Activated naive CD4-positive, alpha-beta T cell treated with anti-CD3 and anti-CD28 coated beads for 36 hours (primary cell): ENCODE measurements at regions of chr13 and their contacts with region 1.

Region 1: DNA sequence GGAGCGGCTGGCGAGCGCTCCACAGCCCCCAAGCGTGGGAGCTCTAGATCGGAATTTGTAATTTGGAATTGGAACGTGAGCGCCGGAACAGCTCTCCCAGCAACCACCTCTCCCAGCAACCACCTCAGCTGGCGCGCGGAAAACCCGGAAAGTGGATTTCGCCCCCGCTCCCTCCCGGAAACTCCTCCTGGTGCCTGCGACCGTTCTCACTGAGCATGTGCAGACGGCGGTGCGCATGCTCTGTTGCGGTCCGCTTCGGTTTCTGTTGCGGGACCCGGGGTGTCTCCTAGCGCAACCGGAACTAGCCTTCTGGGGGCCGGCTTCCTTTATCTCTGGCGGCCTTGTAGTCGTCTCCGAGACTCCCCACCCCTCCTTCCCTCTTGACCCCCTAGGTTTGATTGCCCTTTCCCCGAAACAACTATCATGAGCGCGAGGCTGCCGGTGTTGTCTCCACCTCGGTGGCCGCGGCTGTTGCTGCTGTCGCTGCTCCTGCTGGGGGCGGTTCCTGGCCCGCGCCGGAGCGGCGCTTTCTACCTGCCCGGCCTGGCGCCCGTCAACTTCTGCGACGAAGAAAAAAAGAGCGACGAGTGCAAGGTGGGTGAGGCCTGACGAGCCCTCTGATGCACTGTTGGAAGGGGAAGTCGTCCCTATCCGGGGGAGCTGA is at the start of gene TM9SF2:
- DNase-seq: peak; percentile 98
- H3K4me3 Mint-ChIP-seq: peak within 1 kb of the TSS; percentile 92
- H3K27ac Mint-ChIP-seq: peak within 1 kb of the TSS; percentile 92
- H3K4me1 Mint-ChIP-seq: peaks cover 70% of the 10 kb centered on the region
- H3K27me3 Mint-ChIP-seq: no peaks in the 10 kb centered on the region
- total RNA-seq, gene TM9SF2: 35.2 to 36.4 TPM

Region 2: GRCh38 chr13:99041788-99042187 is 459.5 kb before region 1 on chr13:
- CTCF ChIA-PET with region 1: no interaction called
- intact Hi-C with region 1: loop called (anchors 5 kb)
- DNase-seq: no peak
- H3K4me3 Mint-ChIP-seq: no peak overlapping the region
- H3K27ac Mint-ChIP-seq: no peak overlapping the region
- H3K4me1 Mint-ChIP-seq: peaks cover 80% of the 10 kb centered on the region
- H3K27me3 Mint-ChIP-seq: no peaks in the 10 kb centered on the region

Region 3: DNA sequence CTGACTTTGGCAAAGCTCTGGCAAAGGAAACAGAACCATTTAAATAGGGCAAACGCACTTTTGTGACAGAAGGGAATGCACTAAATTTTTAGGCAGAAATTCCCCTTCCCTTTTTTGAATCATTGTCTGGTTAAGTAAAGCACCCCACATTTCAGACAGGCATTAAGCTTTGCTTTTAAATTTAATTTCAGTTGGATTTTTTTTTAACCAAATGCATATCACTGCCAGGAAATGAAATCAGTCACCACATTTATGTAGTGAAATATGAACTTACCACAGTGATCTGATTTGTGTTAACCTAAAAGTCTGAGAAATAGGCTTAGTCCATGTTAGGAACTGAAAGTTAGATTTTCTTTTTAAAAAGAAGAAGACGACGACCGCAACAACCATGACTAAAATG is 204.9 kb before region 1 on chr13:
- CTCF ChIA-PET with region 1: no interaction called
- intact Hi-C with region 1: loop called (anchors 5 kb)
- DNase-seq: no peak
- H3K4me3 Mint-ChIP-seq: peak overlapping the region; percentile 48
- H3K27ac Mint-ChIP-seq: peak overlapping the region; percentile 87
- H3K4me1 Mint-ChIP-seq: peaks cover 75% of the 10 kb centered on the region
- H3K27me3 Mint-ChIP-seq: no peaks in the 10 kb centered on the region

Region 4: DNA sequence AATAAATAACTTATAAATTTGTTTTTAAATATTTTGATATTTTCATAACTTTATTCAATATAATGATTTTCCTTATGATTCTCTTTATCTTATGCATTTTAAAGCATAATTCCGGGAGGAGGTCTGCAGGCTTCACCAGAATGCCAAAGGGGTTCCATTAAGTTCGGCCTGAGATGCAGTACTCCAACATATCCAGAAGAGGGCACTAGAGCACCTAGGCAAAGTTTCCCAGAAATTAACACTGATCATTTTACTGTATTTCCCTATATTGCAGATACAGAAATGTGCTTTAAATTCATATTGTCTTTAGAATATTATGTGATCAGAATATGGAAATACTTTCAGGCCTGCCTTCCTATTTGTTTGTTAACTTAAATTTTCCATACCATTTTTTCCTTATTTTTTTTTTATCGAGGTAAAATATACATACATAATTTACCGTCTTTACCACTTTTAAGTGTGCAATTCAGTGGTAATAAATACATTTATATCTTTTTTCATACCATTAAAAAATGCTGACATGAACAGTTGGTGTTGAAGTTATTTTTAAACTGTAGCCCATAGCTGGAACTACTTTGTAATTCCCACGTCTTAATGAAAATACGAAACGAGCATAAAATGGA is 58.9 kb before region 1 on chr13:
- CTCF ChIA-PET with region 1: interaction called, 16 read pairs
- intact Hi-C with region 1: loop called (anchors 1 kb)
- DNase-seq: peak; percentile 69
- H3K4me3 Mint-ChIP-seq: no peak overlapping the region
- H3K27ac Mint-ChIP-seq: no peak overlapping the region
- H3K4me1 Mint-ChIP-seq: peaks cover 7% of the 10 kb centered on the region
- H3K27me3 Mint-ChIP-seq: no peaks in the 10 kb centered on the region

Region 5: DNA sequence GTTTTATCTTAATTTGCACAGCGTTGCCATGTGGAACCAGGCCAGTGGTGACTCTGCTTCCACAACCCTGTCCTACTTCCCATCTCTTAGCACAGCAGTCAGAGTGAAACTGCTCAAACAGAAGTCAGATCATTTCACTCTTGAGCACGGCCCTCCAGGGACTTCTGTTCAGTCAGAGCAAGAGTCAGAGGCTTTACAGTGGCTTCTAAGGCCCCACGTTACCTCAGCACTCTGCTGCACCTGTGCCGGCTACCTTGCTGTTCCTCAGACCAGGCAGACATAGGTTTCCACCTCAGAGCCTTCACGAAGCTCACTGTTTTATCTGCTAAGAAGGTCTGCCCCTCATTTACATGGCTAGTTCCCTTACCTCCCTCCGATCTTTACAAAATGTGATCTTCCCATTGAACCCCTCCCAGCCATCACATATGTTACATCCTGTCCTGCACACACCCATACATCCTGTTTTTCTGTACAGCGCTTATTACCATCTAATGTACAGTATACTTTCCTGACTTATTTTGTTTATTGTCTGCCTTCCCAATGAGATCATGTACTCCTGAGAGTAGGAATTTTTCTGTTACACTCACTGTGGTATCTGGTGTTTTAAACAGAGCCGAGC is 41.6 kb after region 1 on chr13:
- CTCF ChIA-PET with region 1: interaction called, 3 read pairs
- intact Hi-C with region 1: loop called (anchors 2 kb)
- DNase-seq: peak; percentile 80
- H3K4me3 Mint-ChIP-seq: no peak overlapping the region
- H3K27ac Mint-ChIP-seq: no peak overlapping the region
- H3K4me1 Mint-ChIP-seq: peaks cover 47% of the 10 kb centered on the region
- H3K27me3 Mint-ChIP-seq: no peaks in the 10 kb centered on the region

Region 6: DNA sequence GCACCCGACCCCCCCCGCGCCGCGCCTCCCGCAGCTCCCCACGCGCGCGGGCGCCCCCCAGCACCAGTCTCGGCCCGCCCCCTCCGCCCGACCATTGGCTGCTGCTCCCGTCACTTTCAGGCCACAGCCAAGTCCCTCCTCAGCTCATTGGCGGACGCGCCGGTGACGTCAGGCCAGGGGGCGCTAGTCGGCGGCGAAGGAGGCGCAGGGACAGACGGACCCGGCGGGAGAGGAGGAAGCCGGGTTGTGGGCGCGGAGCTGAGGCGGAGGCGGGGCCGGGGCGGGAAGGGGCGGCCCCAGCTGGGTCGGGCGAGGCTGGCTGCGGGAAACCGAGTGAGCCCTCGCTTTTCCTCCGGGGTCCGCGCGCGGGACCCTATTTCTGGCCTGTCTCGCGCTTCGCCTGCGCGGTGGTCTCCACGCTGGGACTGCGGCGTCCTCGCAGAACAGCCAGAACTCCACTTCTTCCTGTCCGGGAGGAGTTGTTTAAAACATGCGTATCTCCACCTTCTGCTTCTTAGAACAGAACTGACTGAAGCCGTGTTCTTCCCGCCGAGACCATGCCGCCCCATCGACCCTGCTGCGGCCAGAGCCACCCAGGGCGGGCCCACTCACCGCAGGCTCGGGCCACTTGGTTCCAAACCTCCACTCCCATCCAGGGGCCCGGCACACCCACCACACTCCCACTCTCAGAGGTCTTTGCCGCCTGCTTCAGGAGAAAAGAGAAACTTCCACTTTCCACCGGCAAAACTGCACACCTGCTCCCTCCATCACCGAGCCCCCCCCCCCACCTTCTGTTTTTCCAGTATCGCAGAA is 1173.7 kb after region 1 on chr13:
- CTCF ChIA-PET with region 1: no interaction called
- intact Hi-C with region 1: loop called (anchors 5 kb)
- DNase-seq: peak; percentile 99
- H3K4me3 Mint-ChIP-seq: peak overlapping the region; percentile 76
- H3K27ac Mint-ChIP-seq: peak overlapping the region; percentile 20
- H3K4me1 Mint-ChIP-seq: peaks cover 20% of the 10 kb centered on the region
- H3K27me3 Mint-ChIP-seq: no peaks in the 10 kb centered on the region